Right lobe of liver (tissue), 6 donors: ENCODE measurements at regions of chr6 and their contacts with region 1.

Region 1: DNA sequence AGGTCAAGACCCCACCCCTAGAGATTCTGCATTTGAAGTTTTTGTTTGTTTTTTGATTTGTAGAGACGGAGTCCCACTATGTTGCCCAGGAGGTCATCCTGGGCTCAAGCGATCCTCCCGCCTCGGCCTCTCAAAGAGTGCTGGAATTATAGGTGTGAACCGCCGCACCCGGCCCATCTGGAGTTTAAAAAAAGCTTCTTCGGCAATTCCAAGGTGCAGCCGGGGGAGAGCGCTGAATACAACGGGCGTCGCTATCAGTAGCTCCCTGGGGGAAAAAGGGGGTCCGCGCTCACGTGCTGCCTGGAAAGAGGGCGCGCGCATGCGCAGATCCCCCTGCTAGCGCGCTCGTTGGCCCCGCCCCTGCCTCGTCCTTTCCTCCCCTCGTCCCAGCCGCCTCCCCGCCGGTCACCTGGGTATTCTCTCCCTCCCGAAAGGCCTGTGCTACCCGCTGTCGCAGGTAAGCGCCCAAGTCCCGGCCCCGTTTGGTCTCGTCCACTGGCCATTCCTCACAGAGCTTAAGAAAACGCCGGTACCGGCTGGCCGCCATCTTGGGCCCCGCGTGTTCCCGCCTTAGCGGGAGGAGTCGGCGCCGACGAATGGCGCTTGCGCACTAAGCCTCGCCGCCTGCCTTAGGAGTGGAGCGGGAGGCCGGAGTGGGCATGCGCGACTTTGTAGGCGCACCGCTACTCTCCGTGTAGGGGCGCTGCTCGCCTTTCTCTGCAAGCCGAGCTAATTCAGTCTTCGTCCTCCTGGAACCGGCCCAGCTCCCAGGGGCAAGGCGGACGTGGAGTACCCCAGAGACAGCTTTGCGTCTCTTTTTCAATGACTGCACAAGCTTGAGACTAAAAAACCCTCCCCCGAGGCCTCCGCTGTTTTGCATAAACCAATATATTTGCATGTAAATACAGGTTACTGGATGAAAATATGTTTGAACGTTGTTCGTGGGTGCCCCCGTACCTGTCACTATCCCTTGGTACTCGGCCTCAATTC is at the start of gene UQCC2:
- DNase-seq: peak; percentile 98 to 99 (median 99)
- ATAC-seq: peak; percentile 96 to 99 (median 98)
- H3K4me3 ChIP-seq: peak within 1 kb of the TSS; percentile 61 to 89 (median 68)
- H3K27ac ChIP-seq: peak within 1 kb of the TSS; percentile 25 to 75 (median 75)
- H3K4me1 ChIP-seq: peaks cover 0 to 17% (median under 1%) of the 10 kb centered on the region in 4 donors
- H3K27me3 ChIP-seq: no peaks in the 10 kb centered on the region
- CTCF ChIP-seq: peak; percentile 60 to 87 (median 78)
- POLR2A ChIP-seq: peak; percentile 70
- total RNA-seq, gene UQCC2: 23.7 to 38.4 (median 31.5) TPM

Region 2: DNA sequence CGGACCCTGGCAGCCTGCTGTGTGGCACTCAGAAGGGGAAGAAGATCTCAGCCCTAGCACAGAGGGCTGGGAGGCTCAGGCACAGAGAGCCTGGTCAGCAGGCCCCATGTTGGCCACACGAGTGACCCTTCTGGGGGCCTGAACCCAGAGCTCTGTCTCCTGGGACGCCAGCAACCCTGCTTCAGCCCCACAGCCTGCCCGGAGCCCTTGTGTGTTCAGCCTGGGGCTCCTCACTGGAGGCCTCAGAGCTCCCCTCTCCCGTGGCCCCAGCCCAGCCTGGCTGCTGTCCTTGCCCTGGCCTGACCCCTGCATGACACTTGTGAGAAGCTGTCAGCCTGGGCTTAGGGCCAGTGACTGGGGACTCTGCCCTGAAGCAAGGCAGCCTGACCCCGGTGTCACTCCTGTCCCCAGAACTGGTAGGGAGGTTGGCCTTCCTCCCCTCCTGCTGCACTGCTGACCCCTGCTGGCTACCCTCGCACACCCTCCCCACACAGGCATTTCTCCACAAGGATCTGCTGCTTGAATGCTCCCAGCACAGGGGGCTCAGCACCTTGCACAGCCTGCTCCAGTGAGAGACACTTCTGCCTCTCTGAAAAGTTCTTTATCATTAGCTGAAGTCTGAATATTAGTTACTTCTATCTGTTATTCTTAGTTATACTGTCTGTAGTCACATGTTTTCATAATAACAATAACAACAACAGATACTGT is 50.6 kb after region 1 on chr6:
- intact Hi-C with region 1: loop called (anchors 5 to 10 kb)
- DNase-seq: peak; percentile 95 to 98 (median 98)
- ATAC-seq: peak; percentile 93 to 97 (median 96)
- H3K4me3 ChIP-seq: no peak overlapping the region
- H3K27ac ChIP-seq: peak overlapping the region in 2 of 3 donors; percentile 47 to 83
- H3K4me1 ChIP-seq: peaks cover 0 to 36% (median 10%) of the 10 kb centered on the region in 4 donors
- H3K27me3 ChIP-seq: no peaks in the 10 kb centered on the region
- CTCF ChIP-seq: peak; percentile 82 to 92 (median 86)
- POLR2A ChIP-seq: no peak

Region 3: GRCh38 chr6:34157851-34158250 is 446.4 kb after region 1 on chr6:
- intact Hi-C with region 1: no loop called
- DNase-seq: no peak
- ATAC-seq: no peak
- H3K4me3 ChIP-seq: no peak overlapping the region
- H3K27ac ChIP-seq: no peak overlapping the region
- H3K4me1 ChIP-seq: no peaks in the 10 kb centered on the region
- H3K27me3 ChIP-seq: peaks cover 0 to 9% of the 10 kb centered on the region in 2 donors
- CTCF ChIP-seq: no peak
- POLR2A ChIP-seq: no peak